Mammary epithelial cell (primary cell): ENCODE measurements at regions of chr10 and their contacts with region 1.

Region 1: GRCh38 chr10:93482145-93482834 is at the start of gene MYOF:
- DNase-seq: peak; percentile 82
- H3K4me3 ChIP-seq: peak within 1 kb of the TSS; percentile 47 to 88 (median 85)
- H3K27ac ChIP-seq: peak within 1 kb of the TSS; percentile 95
- H3K4me1 ChIP-seq: peaks cover 15% of the 10 kb centered on the region
- H3K27me3 ChIP-seq: no peaks in the 10 kb centered on the region
- CTCF ChIP-seq: peak; percentile 66 to 69
- total RNA-seq, gene MYOF: 273 to 311 TPM

Region 2: GRCh38 chr10:93080350-93081046 is 401.8 kb before region 1 on chr10:
- CTCF ChIA-PET with region 1: no interaction called
- dilution Hi-C with region 1: no loop called
- in situ Hi-C with region 1: loop called in 1 of 2 experiments (anchors 25 kb)
- intact Hi-C with region 1: loop called (anchors 1 kb)
- DNase-seq: no peak
- H3K4me3 ChIP-seq: no peak overlapping the region
- H3K27ac ChIP-seq: no peak overlapping the region
- H3K4me1 ChIP-seq: no peaks in the 10 kb centered on the region
- H3K27me3 ChIP-seq: peaks cover 2% of the 10 kb centered on the region
- CTCF ChIP-seq: peak; percentile 67 to 92

Region 3: DNA sequence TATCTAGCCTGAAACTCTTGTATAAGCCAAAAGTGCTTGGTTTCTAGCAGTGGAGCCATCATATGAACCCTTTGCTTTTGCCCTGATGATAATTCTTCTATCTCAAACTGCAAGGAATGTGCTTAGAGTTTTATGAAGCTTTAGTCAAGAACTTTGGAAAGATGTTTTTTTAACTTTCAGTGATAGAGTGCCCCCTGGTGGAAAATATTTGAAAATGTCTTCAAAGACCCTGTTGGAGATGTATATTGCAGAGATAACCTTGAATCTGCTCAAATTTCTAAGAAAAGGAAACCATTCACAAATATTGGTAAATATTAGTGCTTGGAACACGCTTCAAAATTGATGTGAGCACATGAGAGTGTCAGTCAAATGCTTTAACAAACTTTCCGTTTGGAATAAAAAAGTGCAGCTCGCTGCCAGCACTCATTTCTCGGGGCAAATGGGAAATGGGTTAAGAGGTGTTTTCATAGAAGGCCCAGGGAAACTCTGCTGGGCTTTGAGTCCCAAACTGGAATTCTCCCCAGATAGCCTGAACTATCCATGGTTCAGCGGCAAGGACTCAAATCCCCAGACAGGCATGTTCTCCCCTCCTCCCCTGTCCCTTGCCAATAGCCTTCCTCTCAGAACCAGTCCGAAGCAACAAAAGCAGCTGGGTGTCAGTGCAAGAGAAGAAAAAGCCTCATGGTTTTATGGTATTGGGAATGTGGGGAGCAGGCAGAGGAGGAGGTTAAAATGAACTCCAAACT is 129.5 kb before region 1 on chr10:
- CTCF ChIA-PET with region 1: no interaction called
- dilution Hi-C with region 1: no loop called
- in situ Hi-C with region 1: no loop called
- intact Hi-C with region 1: loop called (anchors 1 kb)
- DNase-seq: no peak
- H3K4me3 ChIP-seq: no peak overlapping the region
- H3K27ac ChIP-seq: no peak overlapping the region
- H3K4me1 ChIP-seq: no peaks in the 10 kb centered on the region
- H3K27me3 ChIP-seq: no peaks in the 10 kb centered on the region
- CTCF ChIP-seq: peak; percentile 43 to 48

Region 4: DNA sequence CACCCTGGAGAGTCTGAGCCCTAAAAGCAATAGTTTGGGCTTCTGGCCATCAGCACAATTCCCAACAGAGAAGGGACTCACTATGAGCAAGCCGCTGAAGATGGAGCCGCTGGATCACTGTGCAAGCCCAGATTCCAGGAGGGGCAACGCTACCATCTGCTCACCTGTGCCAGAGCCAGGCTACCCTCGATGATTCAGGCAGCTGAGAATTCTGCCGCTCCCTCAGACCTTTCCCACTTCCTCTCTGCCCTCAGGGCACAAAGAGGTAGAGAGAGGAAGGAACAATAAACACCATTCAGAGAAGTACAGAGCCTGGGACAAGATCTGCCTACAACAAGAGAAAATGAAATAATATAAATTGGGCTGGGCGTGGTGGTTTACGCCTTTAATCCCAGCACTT is 98.3 kb before region 1 on chr10:
- CTCF ChIA-PET with region 1: interaction called, 4 read pairs
- dilution Hi-C with region 1: no loop called
- in situ Hi-C with region 1: loop called (anchors 5 kb)
- intact Hi-C with region 1: loop called (anchors 2 kb)
- DNase-seq: peak; percentile 100
- H3K4me3 ChIP-seq: peak overlapping the region in 1 of 3 experiments; percentile 14
- H3K27ac ChIP-seq: peak overlapping the region; percentile 98
- H3K4me1 ChIP-seq: peaks cover 37% of the 10 kb centered on the region
- H3K27me3 ChIP-seq: no peaks in the 10 kb centered on the region
- CTCF ChIP-seq: no peak

Region 5: GRCh38 chr10:93437088-93437945 is 45.0 kb before region 1 on chr10:
- CTCF ChIA-PET with region 1: interaction called, 10 read pairs
- dilution Hi-C with region 1: no loop called
- in situ Hi-C with region 1: loop called in 1 of 2 experiments (anchors 5 kb)
- intact Hi-C with region 1: loop called (anchors 1 kb)
- DNase-seq: peak; percentile 97
- H3K4me3 ChIP-seq: peak overlapping the region in 1 of 3 experiments; percentile 18
- H3K27ac ChIP-seq: peak overlapping the region; percentile 99
- H3K4me1 ChIP-seq: peaks cover 65% of the 10 kb centered on the region
- H3K27me3 ChIP-seq: no peaks in the 10 kb centered on the region
- CTCF ChIP-seq: no peak

Region 6: DNA sequence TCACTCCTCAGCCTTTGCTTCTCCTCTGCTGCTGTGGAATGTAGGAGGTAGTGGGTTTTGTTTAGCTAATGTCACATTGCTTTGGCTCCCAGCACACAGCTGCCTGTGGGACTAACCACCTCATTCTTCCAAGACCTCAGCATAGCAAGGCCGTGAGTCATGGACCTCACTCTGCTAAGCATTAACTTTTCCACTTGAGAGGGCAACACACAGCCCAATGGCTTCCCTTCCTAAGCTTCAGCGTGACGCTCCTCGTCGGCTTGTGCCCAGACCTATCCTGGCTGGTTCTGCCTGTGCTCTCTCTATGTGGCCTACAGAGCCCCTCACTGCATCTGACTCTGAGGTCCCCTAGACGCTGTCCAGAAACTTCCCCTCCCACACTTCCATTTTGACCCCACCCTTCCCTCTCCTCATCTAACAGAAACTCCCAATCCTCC is 23.5 kb before region 1 on chr10:
- CTCF ChIA-PET with region 1: interaction called, 7 read pairs
- dilution Hi-C with region 1: no loop called
- in situ Hi-C with region 1: no loop called
- intact Hi-C with region 1: loop called (anchors 2 kb)
- DNase-seq: peak; percentile 97
- H3K4me3 ChIP-seq: peak overlapping the region in 1 of 3 experiments; percentile 21
- H3K27ac ChIP-seq: peak overlapping the region; percentile 93
- H3K4me1 ChIP-seq: peaks cover 49% of the 10 kb centered on the region
- H3K27me3 ChIP-seq: no peaks in the 10 kb centered on the region
- CTCF ChIP-seq: no peak

Region 7: GRCh38 chr10:93509816-93510215 is 27.5 kb after region 1 on chr10:
- CTCF ChIA-PET with region 1: no interaction called
- dilution Hi-C with region 1: no loop called
- in situ Hi-C with region 1: no loop called
- intact Hi-C with region 1: loop called (anchors 2 kb)
- DNase-seq: no peak
- H3K4me3 ChIP-seq: no peak overlapping the region
- H3K27ac ChIP-seq: no peak overlapping the region
- H3K4me1 ChIP-seq: no peaks in the 10 kb centered on the region
- H3K27me3 ChIP-seq: no peaks in the 10 kb centered on the region
- CTCF ChIP-seq: no peak